CD4-positive, alpha-beta memory T cell (primary cell): ENCODE measurements at regions of chr12 and their contacts with region 1.

Region 1: DNA sequence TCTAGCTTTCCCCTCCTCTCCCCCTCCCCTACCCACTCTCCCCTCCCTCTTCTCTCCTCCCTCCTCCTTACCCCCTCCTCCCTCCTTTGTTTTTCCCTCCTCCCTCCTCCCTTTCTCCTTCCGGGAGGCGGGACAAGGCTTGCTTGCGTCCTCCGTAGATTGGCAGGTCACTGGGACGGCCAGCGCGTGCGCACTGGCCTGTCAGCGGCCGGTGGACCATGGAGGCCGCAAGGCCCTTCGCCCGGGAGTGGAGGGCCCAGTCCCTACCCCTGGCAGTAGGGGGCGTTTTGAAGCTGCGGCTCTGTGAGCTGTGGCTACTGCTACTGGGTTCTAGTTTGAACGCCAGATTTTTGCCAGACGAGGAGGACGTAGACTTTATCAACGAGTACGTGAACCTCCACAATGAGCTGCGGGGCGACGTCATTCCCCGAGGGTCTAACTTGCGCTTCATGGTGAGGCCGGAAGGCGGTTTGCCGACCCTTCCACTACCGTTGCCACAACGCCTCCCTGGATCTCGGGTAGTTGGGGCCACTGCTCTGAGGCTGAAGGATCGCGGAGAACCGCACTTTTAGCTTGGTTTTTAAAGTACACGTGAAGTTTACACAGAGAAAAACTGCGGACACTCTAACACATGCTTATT is at the start of gene GLIPR1L2:
- DNase-seq: peak; percentile 82 to 86 (median 84)
- H3K4me3 ChIP-seq: peak within 1 kb of the TSS; percentile 69 to 74
- H3K4me3 Mint-ChIP-seq: peak within 1 kb of the TSS; percentile 90 to 97 (median 93)
- H3K27ac ChIP-seq: peak within 1 kb of the TSS; percentile 74
- H3K27ac Mint-ChIP-seq: peak within 1 kb of the TSS; percentile 96 to 99 (median 97)
- H3K4me1 ChIP-seq: peaks cover 56% of the 10 kb centered on the region
- H3K4me1 Mint-ChIP-seq: peaks cover 38 to 71% (median 51%) of the 10 kb centered on the region in 4 donors
- H3K27me3 ChIP-seq: no peaks in the 10 kb centered on the region
- H3K27me3 Mint-ChIP-seq: no peaks in the 10 kb centered on the region
- total RNA-seq, gene GLIPR1L2: 0.47 to 0.55 TPM

Region 2: GRCh38 chr12:74424778-74425177 is 966.2 kb before region 1 on chr12:
- CTCF ChIA-PET with region 1: no interaction called
- POLR2A ChIA-PET with region 1: no interaction called
- intact Hi-C with region 1: no loop called
- DNase-seq: no peak
- H3K4me3 ChIP-seq: no peak overlapping the region
- H3K4me3 Mint-ChIP-seq: no peak overlapping the region
- H3K27ac ChIP-seq: no peak overlapping the region
- H3K27ac Mint-ChIP-seq: peak overlapping the region in 1 of 7 donors; percentile 22
- H3K4me1 ChIP-seq: no peaks in the 10 kb centered on the region
- H3K4me1 Mint-ChIP-seq: no peaks in the 10 kb centered on the region
- H3K27me3 ChIP-seq: no peaks in the 10 kb centered on the region
- H3K27me3 Mint-ChIP-seq: peaks cover 0 to 3% of the 10 kb centered on the region in 2 donors

Region 3: DNA sequence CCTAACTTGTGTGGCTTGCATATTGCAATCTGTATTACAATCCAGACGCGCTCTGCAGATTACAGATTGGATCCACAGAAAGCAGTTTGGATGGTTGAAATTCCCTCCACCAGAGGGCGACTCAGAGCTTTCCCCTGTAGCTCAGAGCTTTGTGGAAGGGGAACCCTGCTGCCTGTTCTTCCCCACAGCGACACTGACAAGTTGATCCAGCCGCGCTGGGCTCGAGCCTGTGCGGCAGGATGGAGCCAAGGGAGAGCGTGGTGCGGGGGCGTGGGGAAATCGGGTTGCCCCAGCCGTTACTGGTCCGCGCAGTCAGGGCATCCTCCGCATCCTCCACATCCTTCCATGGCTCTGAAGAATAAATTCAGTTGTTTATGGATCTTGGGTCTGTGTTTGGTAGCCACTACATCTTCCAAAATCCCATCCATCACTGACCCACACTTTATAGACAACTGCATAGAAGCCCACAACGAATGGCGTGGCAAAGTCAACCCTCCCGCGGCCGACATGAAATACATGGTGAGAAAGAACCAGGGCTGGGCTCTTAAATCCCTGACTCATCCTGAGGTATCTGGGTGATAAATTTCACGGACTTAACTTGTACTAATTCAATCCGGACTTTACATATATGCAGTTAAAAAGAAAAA is 56.5 kb before region 1 on chr12 and contains the start of gene GLIPR1L1:
- CTCF ChIA-PET with region 1: interaction called, 16 read pairs
- POLR2A ChIA-PET with region 1: interaction called, 3 read pairs
- intact Hi-C with region 1: loop called (anchors 1 kb)
- DNase-seq: peak; percentile 76 to 82 (median 77)
- H3K4me3 ChIP-seq: peak within 1 kb of the TSS in 1 of 2 donors; percentile 54
- H3K4me3 Mint-ChIP-seq: peak within 1 kb of the TSS; percentile 70 to 86 (median 80)
- H3K27ac ChIP-seq: no peak within 1 kb of the TSS
- H3K27ac Mint-ChIP-seq: peak within 1 kb of the TSS in 1 of 7 donors; percentile 54
- H3K4me1 ChIP-seq: peaks cover 21% of the 10 kb centered on the region
- H3K4me1 Mint-ChIP-seq: peaks cover 13 to 21% (median 17%) of the 10 kb centered on the region in 4 donors
- H3K27me3 ChIP-seq: peaks cover 6% of the 10 kb centered on the region
- H3K27me3 Mint-ChIP-seq: peaks cover 6 to 12% of the 10 kb centered on the region in 2 donors
- total RNA-seq, gene GLIPR1L1: not detected

Region 4: GRCh38 chr12:75437564-75437963 is 46.5 kb after region 1 on chr12:
- CTCF ChIA-PET with region 1: interaction called, 19 read pairs
- POLR2A ChIA-PET with region 1: interaction called, 6 read pairs
- intact Hi-C with region 1: loop called (anchors 5 kb)
- DNase-seq: peak; percentile 43 to 61 (median 51)
- H3K4me3 ChIP-seq: no peak overlapping the region
- H3K4me3 Mint-ChIP-seq: peak overlapping the region in 2 of 8 donors; percentile 17 to 43
- H3K27ac ChIP-seq: no peak overlapping the region
- H3K27ac Mint-ChIP-seq: peak overlapping the region in 5 of 7 donors; percentile 52 to 91 (median 57)
- H3K4me1 ChIP-seq: peaks cover 13% of the 10 kb centered on the region
- H3K4me1 Mint-ChIP-seq: peaks cover 11 to 17% (median 15%) of the 10 kb centered on the region in 4 donors
- H3K27me3 ChIP-seq: no peaks in the 10 kb centered on the region
- H3K27me3 Mint-ChIP-seq: no peaks in the 10 kb centered on the region

Region 5: GRCh38 chr12:75489613-75490210 is 98.7 kb after region 1 on chr12:
- CTCF ChIA-PET with region 1: interaction called, 87 read pairs
- POLR2A ChIA-PET with region 1: interaction called, 106 read pairs
- intact Hi-C with region 1: no loop called
- DNase-seq: peak in 1 of 5 donors; percentile 41
- H3K4me3 ChIP-seq: no peak overlapping the region
- H3K4me3 Mint-ChIP-seq: peak overlapping the region in 7 of 8 donors; percentile 2 to 72 (median 28)
- H3K27ac ChIP-seq: peak overlapping the region; percentile 3
- H3K27ac Mint-ChIP-seq: peak overlapping the region; percentile 57 to 92 (median 83)
- H3K4me1 ChIP-seq: peaks cover 55% of the 10 kb centered on the region
- H3K4me1 Mint-ChIP-seq: peaks cover 47 to 81% (median 59%) of the 10 kb centered on the region in 4 donors
- H3K27me3 ChIP-seq: no peaks in the 10 kb centered on the region
- H3K27me3 Mint-ChIP-seq: no peaks in the 10 kb centered on the region

Region 6: DNA sequence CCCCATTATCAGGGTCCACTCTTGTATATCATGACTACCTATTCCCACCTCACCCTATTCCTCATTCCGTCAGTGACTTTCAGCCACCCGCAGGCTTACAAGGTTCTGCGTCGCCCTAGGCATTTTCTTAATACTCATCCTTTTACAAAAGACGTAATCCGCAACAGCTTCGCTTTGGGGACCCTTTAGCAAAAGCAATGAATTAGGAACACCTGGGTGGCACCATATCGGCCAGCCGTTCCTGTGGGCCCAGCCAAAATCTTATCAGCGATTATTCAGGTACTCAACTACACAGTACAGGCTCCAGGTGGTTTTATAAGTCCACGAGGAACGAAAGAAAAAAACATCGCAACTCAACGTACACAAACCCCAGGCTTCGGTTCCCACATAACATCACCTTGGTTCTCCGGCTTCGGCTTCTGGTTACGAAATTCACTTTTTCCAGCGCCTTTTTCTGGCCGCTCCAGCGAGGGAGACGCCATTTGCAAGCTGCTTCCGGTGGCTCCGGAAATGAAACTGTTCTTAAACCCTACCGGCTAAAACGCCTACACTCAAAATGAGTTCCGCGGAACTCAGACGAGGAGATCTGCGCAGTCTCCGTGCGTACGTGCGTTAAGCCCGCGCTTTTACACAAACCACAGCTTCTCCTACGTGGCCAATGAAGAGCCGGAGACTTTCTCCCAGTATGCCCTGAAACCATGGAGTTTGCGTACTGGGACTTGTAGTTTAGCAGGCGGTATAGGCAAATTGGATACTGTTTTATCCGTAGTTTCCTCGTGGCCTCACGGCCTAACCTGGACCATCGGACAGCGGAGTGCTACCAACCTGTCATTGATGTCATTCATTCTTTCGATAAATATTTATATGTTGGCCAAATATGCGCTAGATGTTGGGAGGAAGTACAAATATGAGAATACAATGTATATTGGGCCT is 120.4 kb after region 1 on chr12 and contains the start of gene KRR1:
- CTCF ChIA-PET with region 1: interaction called, 15 read pairs
- POLR2A ChIA-PET with region 1: interaction called, 35 read pairs
- intact Hi-C with region 1: loop called (anchors 1 kb)
- DNase-seq: peak; percentile 88 to 94 (median 92)
- H3K4me3 ChIP-seq: peak within 1 kb of the TSS; percentile 85 to 99
- H3K4me3 Mint-ChIP-seq: peak within 1 kb of the TSS; percentile 99 to 100 (median 100)
- H3K27ac ChIP-seq: peak within 1 kb of the TSS; percentile 94
- H3K27ac Mint-ChIP-seq: peak within 1 kb of the TSS; percentile 98 to 100 (median 100)
- H3K4me1 ChIP-seq: peaks cover 27% of the 10 kb centered on the region
- H3K4me1 Mint-ChIP-seq: peaks cover 25 to 42% (median 31%) of the 10 kb centered on the region in 4 donors
- H3K27me3 ChIP-seq: no peaks in the 10 kb centered on the region
- H3K27me3 Mint-ChIP-seq: no peaks in the 10 kb centered on the region
- total RNA-seq, gene KRR1: 60.7 to 65.0 TPM

Region 7: GRCh38 chr12:75550401-75550851 is 159.4 kb after region 1 on chr12:
- CTCF ChIA-PET with region 1: no interaction called
- POLR2A ChIA-PET with region 1: no interaction called
- intact Hi-C with region 1: no loop called
- DNase-seq: no peak
- H3K4me3 ChIP-seq: no peak overlapping the region
- H3K4me3 Mint-ChIP-seq: no peak overlapping the region
- H3K27ac ChIP-seq: no peak overlapping the region
- H3K27ac Mint-ChIP-seq: no peak overlapping the region
- H3K4me1 ChIP-seq: no peaks in the 10 kb centered on the region
- H3K4me1 Mint-ChIP-seq: no peaks in the 10 kb centered on the region
- H3K27me3 ChIP-seq: peaks cover 4% of the 10 kb centered on the region
- H3K27me3 Mint-ChIP-seq: peaks cover 4 to 13% of the 10 kb centered on the region in 2 donors